Caco-2 (cell line): ENCODE measurements at regions of chr12 and their contacts with region 1.

Region 1: GRCh38 chr12:17642340-17642650 is 447.7 kb downstream of the RERGL start:
- DNase-seq: no peak
- H3K4me3 ChIP-seq: no peak overlapping the region
- H3K4me3 Mint-ChIP-seq: no peak overlapping the region
- H3K27ac Mint-ChIP-seq: no peak overlapping the region
- H3K4me1 ChIP-seq: no peaks in the 10 kb centered on the region
- H3K4me1 Mint-ChIP-seq: no peaks in the 10 kb centered on the region
- H3K27me3 ChIP-seq: no peaks in the 10 kb centered on the region
- H3K27me3 Mint-ChIP-seq: peaks cover 3% of the 10 kb centered on the region
- CTCF ChIP-seq: no peak

Region 2: DNA sequence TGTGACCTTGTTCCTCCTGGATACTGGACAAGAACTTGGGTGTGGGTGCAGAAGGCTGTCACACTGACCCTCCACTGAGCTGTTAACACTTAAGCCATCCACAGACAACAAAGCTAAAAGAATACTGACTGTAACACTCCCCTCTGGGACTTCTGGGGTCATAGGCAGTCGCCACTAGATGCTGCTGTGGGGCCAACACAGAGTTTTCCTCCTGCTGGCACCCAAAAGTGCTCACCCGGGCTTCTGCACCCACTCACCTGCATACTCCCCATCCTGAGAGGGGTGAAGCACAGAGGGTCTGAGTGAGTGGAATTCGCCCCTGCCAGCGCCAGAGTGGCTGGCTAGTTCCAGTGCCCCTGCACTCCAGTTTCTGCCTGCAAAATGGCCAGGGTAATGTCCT is 613.9 kb before region 1 on chr12:
- CTCF ChIA-PET with region 1: no interaction called
- POLR2A ChIA-PET with region 1: no interaction called
- intact Hi-C with region 1: loop called (anchors 1 kb)
- DNase-seq: peak in 1 of 2 experiments; percentile 30
- H3K4me3 ChIP-seq: no peak overlapping the region
- H3K4me3 Mint-ChIP-seq: no peak overlapping the region
- H3K27ac Mint-ChIP-seq: no peak overlapping the region
- H3K4me1 ChIP-seq: no peaks in the 10 kb centered on the region
- H3K4me1 Mint-ChIP-seq: no peaks in the 10 kb centered on the region
- H3K27me3 ChIP-seq: no peaks in the 10 kb centered on the region
- H3K27me3 Mint-ChIP-seq: peaks cover 3% of the 10 kb centered on the region
- CTCF ChIP-seq: peak; percentile 27 to 38

Region 3: GRCh38 chr12:17159506-17160300 is 482.6 kb before region 1 on chr12:
- CTCF ChIA-PET with region 1: no interaction called
- POLR2A ChIA-PET with region 1: no interaction called
- intact Hi-C with region 1: loop called (anchors 1 kb)
- DNase-seq: no peak
- H3K4me3 ChIP-seq: no peak overlapping the region
- H3K4me3 Mint-ChIP-seq: no peak overlapping the region
- H3K27ac Mint-ChIP-seq: no peak overlapping the region
- H3K4me1 ChIP-seq: no peaks in the 10 kb centered on the region
- H3K4me1 Mint-ChIP-seq: no peaks in the 10 kb centered on the region
- H3K27me3 ChIP-seq: no peaks in the 10 kb centered on the region
- H3K27me3 Mint-ChIP-seq: no peaks in the 10 kb centered on the region
- CTCF ChIP-seq: no peak

Region 4: GRCh38 chr12:17301544-17301943 is 340.8 kb before region 1 on chr12:
- CTCF ChIA-PET with region 1: no interaction called
- POLR2A ChIA-PET with region 1: no interaction called
- intact Hi-C with region 1: loop called (anchors 1 kb)
- DNase-seq: no peak
- H3K4me3 ChIP-seq: no peak overlapping the region
- H3K4me3 Mint-ChIP-seq: no peak overlapping the region
- H3K27ac Mint-ChIP-seq: no peak overlapping the region
- H3K4me1 ChIP-seq: 0 out of 2 replicates have a peak, but pooled peaks cover 7% of the 10 kb centered on the region
- H3K4me1 Mint-ChIP-seq: peaks cover 6% of the 10 kb centered on the region
- H3K27me3 ChIP-seq: no peaks in the 10 kb centered on the region
- H3K27me3 Mint-ChIP-seq: no peaks in the 10 kb centered on the region
- CTCF ChIP-seq: no peak

Region 5: DNA sequence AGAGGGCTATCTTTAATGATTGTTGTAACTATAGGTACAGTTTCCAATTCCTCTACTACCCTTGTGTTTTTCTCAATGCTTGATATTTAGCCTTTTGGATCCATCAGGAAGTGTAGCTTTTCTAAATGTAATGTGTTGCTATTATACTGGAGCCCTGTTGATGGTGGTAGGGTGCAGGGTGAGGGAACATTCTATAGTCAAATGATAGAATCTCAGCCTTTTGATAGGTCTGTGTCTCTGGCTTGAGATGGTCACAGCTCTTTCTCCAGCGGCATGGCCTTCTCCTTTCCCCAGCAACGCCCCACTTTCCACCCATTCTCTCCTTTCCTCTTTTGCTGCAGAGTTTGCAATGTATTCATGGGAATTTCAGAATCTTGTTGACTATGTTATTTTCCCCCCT is 49.1 kb after region 1 on chr12:
- CTCF ChIA-PET with region 1: no interaction called
- POLR2A ChIA-PET with region 1: no interaction called
- intact Hi-C with region 1: no loop called
- DNase-seq: no peak
- H3K4me3 ChIP-seq: no peak overlapping the region
- H3K4me3 Mint-ChIP-seq: no peak overlapping the region
- H3K27ac Mint-ChIP-seq: no peak overlapping the region
- H3K4me1 ChIP-seq: no peaks in the 10 kb centered on the region
- H3K4me1 Mint-ChIP-seq: no peaks in the 10 kb centered on the region
- H3K27me3 ChIP-seq: no peaks in the 10 kb centered on the region
- H3K27me3 Mint-ChIP-seq: peaks cover 2% of the 10 kb centered on the region
- CTCF ChIP-seq: no peak

Region 6: DNA sequence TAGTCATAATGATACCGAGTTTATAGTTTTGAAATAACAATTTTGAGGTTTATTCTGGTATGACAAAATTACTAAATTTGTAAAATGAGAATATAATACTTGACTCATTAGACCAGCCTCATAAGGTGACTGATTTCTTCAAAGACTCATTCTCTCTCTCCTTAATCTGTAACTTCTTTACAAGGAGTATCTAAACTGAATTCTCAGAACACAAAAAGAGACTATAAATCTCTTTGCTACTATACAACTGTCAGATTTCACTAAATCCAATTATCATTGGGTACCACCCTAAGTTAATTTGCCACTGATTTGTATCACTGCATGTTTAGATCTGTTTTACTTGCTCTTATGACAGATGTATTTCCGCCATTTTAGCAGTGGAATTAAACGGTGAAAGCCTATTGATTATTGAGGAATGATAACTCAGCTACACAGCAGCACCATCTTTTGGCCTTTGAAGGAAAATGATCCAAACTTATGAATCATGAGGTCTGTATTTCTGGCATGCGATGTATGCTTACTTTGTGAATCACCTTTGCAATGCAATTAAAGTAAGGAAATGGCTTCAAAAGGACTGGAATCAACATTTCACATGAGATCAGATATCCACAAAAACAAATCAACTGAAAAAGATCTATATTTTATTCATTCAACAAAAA is 286.5 kb after region 1 on chr12:
- CTCF ChIA-PET with region 1: no interaction called
- POLR2A ChIA-PET with region 1: no interaction called
- intact Hi-C with region 1: loop called (anchors 1 kb)
- DNase-seq: peak; percentile 33 to 61
- H3K4me3 ChIP-seq: no peak overlapping the region
- H3K4me3 Mint-ChIP-seq: peak overlapping the region; percentile 40
- H3K27ac Mint-ChIP-seq: peak overlapping the region; percentile 41
- H3K4me1 ChIP-seq: peaks cover 18% of the 10 kb centered on the region
- H3K4me1 Mint-ChIP-seq: peaks cover 7% of the 10 kb centered on the region
- H3K27me3 ChIP-seq: no peaks in the 10 kb centered on the region
- H3K27me3 Mint-ChIP-seq: no peaks in the 10 kb centered on the region
- CTCF ChIP-seq: peak; percentile 41 to 47